ENCODE measurements at regions of chr10 and their contacts with region 1.

Region 1: GRCh38 chr10:98572594-98572993 is 125.9 kb upstream of the HPS1 start:
- DNase-seq: no peak
- H3K4me3 ChIP-seq: no peak overlapping the region
- H3K27ac ChIP-seq: no peak overlapping the region
- H3K4me1 ChIP-seq: no peaks in the 10 kb centered on the region
- H3K27me3 ChIP-seq: no peaks in the 10 kb centered on the region
- CTCF ChIP-seq: no peak

Region 2: GRCh38 chr10:98115031-98115787 is 457.4 kb before region 1 on chr10:
- CTCF ChIA-PET with region 1: no interaction called
- dilution Hi-C with region 1: no loop called
- in situ Hi-C with region 1: no loop called
- intact Hi-C with region 1: no loop called
- DNase-seq: no peak
- H3K4me3 ChIP-seq: no peak overlapping the region
- H3K27ac ChIP-seq: no peak overlapping the region
- H3K4me1 ChIP-seq: no peaks in the 10 kb centered on the region
- H3K27me3 ChIP-seq: peaks cover 8% of the 10 kb centered on the region
- CTCF ChIP-seq: no peak

Region 3: DNA sequence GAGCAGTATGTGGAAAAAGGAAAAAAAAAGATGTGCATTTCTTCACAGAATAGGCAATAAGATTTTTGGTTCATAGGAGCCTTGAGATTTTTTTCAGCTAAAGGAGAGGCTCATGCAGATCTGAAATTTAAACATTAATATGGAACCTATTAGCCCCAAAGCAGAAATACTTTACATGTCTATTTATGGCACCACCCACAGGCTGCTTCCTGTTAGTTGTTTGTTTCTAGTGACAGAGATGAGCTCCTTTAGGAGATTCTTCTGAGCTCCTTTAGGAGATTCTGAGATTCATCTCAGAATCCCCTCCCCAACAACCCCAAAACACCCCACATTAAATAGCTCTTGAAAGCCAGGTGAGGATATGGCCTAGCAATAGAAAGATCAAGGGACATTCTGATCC is 98.0 kb before region 1 on chr10:
- CTCF ChIA-PET with region 1: no interaction called
- dilution Hi-C with region 1: loop called (anchors 5 kb)
- in situ Hi-C with region 1: no loop called
- intact Hi-C with region 1: no loop called
- DNase-seq: no peak
- H3K4me3 ChIP-seq: no peak overlapping the region
- H3K27ac ChIP-seq: no peak overlapping the region
- H3K4me1 ChIP-seq: no peaks in the 10 kb centered on the region
- H3K27me3 ChIP-seq: no peaks in the 10 kb centered on the region
- CTCF ChIP-seq: no peak